IMR-90 (cell line): ENCODE measurements at regions of chr1 and their contacts with region 1.

Region 1: GRCh38 chr1:78839704-78840277 is 166.7 kb downstream of the ADGRL4 start:
- DNase-seq: peak; percentile 51
- ATAC-seq: peak; percentile 34; the same call in 1 of the 2 replicates
- H3K4me3 ChIP-seq: no peak overlapping the region
- H3K27ac ChIP-seq: no peak overlapping the region
- H3K4me1 ChIP-seq: peaks cover 9% of the 10 kb centered on the region
- H3K27me3 ChIP-seq: no peaks in the 10 kb centered on the region
- CTCF ChIP-seq: peak; percentile 71
- POLR2A ChIP-seq: no peak
- RAD21 ChIP-seq: peak; percentile 72

Region 2: GRCh38 chr1:78726686-78727085 is 113.1 kb before region 1 on chr1:
- CTCF ChIA-PET with region 1: no interaction called
- POLR2A ChIA-PET with region 1: no interaction called
- dilution Hi-C with region 1: no loop called
- in situ Hi-C with region 1: no loop called
- intact Hi-C with region 1: no loop called
- DNase-seq: peak; percentile 24
- ATAC-seq: peak; percentile 32; the same call in 1 of the 2 replicates
- H3K4me3 ChIP-seq: no peak overlapping the region
- H3K27ac ChIP-seq: no peak overlapping the region
- H3K4me1 ChIP-seq: no peaks in the 10 kb centered on the region
- H3K27me3 ChIP-seq: 0 out of 2 replicates have a peak, but pooled peaks cover 3% of the 10 kb centered on the region
- CTCF ChIP-seq: no peak
- POLR2A ChIP-seq: no peak
- RAD21 ChIP-seq: no peak

Region 3: GRCh38 chr1:78972723-78973122 is 132.9 kb after region 1 on chr1:
- CTCF ChIA-PET with region 1: no interaction called
- POLR2A ChIA-PET with region 1: no interaction called
- dilution Hi-C with region 1: no loop called
- in situ Hi-C with region 1: no loop called
- intact Hi-C with region 1: no loop called
- DNase-seq: no peak
- ATAC-seq: no peak
- H3K4me3 ChIP-seq: no peak overlapping the region
- H3K27ac ChIP-seq: no peak overlapping the region
- H3K4me1 ChIP-seq: no peaks in the 10 kb centered on the region
- H3K27me3 ChIP-seq: no peaks in the 10 kb centered on the region
- CTCF ChIP-seq: no peak
- POLR2A ChIP-seq: no peak
- RAD21 ChIP-seq: no peak

Region 4: DNA sequence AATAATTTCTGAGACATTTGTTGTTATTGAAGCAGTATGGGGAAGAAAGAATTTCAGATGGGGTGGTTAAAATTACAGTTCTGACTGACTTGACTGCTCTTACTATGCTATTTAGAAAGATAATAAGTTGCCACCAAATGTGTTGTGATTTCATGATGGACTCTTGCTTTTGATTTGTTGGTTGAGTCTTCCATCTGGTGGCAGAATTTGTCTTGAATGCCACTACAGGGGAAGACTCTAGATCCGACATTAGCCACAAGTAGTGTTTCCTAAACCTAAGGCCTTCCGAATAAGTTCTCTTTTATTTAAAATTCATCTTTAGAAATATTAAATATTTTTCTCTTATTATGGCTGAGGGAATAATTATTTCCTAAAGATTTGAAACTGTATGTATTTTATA is 357.6 kb after region 1 on chr1:
- CTCF ChIA-PET with region 1: interaction called, 4 read pairs
- POLR2A ChIA-PET with region 1: no interaction called
- dilution Hi-C with region 1: no loop called
- in situ Hi-C with region 1: loop called (anchors 5 kb)
- intact Hi-C with region 1: loop called (anchors 2 kb)
- DNase-seq: peak; percentile 38
- ATAC-seq: no peak
- H3K4me3 ChIP-seq: no peak overlapping the region
- H3K27ac ChIP-seq: no peak overlapping the region
- H3K4me1 ChIP-seq: peaks cover 2% of the 10 kb centered on the region
- H3K27me3 ChIP-seq: no peaks in the 10 kb centered on the region
- CTCF ChIP-seq: peak; percentile 46
- POLR2A ChIP-seq: no peak
- RAD21 ChIP-seq: peak; percentile 51

Region 5: GRCh38 chr1:79353224-79353623 is 513.4 kb after region 1 on chr1:
- CTCF ChIA-PET with region 1: no interaction called
- POLR2A ChIA-PET with region 1: no interaction called
- dilution Hi-C with region 1: no loop called
- in situ Hi-C with region 1: no loop called
- intact Hi-C with region 1: loop called (anchors 2 kb)
- DNase-seq: peak; percentile 74
- ATAC-seq: peak; percentile 73; the same call in 1 of the 2 replicates
- H3K4me3 ChIP-seq: no peak overlapping the region
- H3K27ac ChIP-seq: no peak overlapping the region
- H3K4me1 ChIP-seq: peaks cover 5% of the 10 kb centered on the region
- H3K27me3 ChIP-seq: no peaks in the 10 kb centered on the region
- CTCF ChIP-seq: peak; percentile 59
- POLR2A ChIP-seq: no peak
- RAD21 ChIP-seq: peak; percentile 60

Region 6: DNA sequence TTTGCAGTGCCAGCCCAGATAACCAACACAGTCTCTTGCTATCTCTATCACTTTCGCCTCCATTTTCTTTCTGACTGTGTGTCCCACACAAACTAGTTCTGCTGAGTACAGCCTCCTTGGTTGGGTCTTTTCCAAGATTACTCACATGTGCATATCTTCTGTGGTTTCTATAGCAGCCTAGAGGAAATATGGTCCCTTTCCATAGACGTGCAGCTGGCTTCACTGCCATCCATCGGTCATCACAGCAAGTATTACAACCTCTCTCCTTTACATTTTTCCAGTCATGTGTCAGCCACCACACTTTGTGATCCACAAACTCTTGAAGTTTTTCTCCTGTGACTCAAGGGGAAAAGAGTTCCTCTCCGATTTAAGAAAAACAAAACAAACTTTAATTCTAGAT is 1060.1 kb after region 1 on chr1:
- CTCF ChIA-PET with region 1: no interaction called
- POLR2A ChIA-PET with region 1: no interaction called
- dilution Hi-C with region 1: no loop called
- in situ Hi-C with region 1: no loop called
- intact Hi-C with region 1: loop called (anchors 10 kb)
- DNase-seq: peak; percentile 100
- ATAC-seq: peak; percentile 93
- H3K4me3 ChIP-seq: no peak overlapping the region
- H3K27ac ChIP-seq: peak overlapping the region; percentile 51
- H3K4me1 ChIP-seq: peaks cover 5% of the 10 kb centered on the region
- H3K27me3 ChIP-seq: no peaks in the 10 kb centered on the region
- CTCF ChIP-seq: 0 out of 2 replicates have a peak, but pooled peaks have one; percentile 24
- POLR2A ChIP-seq: no peak
- RAD21 ChIP-seq: peak; percentile 46